ENCODE measurements at regions of chr6 and their contacts with region 1.

Region 1: DNA sequence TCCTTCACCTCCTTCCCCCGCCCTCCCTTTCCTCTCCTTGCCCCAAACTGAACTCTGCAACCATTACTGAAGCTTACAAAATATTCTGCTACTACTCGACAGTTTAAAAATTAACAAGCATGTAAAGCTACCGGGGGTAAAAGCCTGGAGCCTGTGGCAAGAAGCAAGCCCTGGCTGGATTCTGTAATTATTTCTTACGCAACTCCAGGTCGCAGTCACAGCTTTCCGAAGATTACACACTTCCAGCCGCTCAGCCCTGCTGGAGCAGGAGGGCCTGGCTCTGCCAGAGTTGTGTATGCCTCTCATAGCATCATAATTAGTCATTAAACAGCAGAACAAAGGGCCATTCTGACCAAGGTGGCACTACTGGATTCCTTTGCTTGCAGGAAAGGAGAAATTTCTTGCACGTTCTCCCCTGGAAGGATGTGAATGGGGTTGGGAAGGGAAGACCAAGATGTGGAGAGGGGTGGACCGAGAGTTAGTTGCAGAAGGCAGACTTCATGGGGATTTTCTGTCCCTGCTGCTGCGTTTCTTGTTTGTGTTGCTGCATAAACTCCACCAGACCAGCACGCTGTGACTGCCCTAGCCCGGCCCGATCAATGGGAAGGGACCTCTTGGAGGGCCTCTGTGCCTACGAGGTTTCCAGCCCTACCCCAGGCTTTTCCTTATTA is 23.6 kb downstream of the FOXQ1 start:
- DNase-seq: peak; percentile 95
- H3K4me3 Mint-ChIP-seq: no peak overlapping the region
- H3K27ac Mint-ChIP-seq: peak overlapping the region; percentile 39
- H3K4me1 Mint-ChIP-seq: peaks cover 25% of the 10 kb centered on the region
- H3K27me3 Mint-ChIP-seq: no peaks in the 10 kb centered on the region
- CTCF ChIP-seq: no peak

Region 2: GRCh38 chr6:188821-189655 is 1146.5 kb before region 1 on chr6:
- CTCF ChIA-PET with region 1: no interaction called
- POLR2A ChIA-PET with region 1: no interaction called
- intact Hi-C with region 1: loop called (anchors 5 kb)
- DNase-seq: peak; percentile 97
- H3K4me3 Mint-ChIP-seq: no peak overlapping the region
- H3K27ac Mint-ChIP-seq: peak overlapping the region; percentile 69
- H3K4me1 Mint-ChIP-seq: peaks cover 18% of the 10 kb centered on the region
- H3K27me3 Mint-ChIP-seq: no peaks in the 10 kb centered on the region
- CTCF ChIP-seq: peak; percentile 92

Region 3: DNA sequence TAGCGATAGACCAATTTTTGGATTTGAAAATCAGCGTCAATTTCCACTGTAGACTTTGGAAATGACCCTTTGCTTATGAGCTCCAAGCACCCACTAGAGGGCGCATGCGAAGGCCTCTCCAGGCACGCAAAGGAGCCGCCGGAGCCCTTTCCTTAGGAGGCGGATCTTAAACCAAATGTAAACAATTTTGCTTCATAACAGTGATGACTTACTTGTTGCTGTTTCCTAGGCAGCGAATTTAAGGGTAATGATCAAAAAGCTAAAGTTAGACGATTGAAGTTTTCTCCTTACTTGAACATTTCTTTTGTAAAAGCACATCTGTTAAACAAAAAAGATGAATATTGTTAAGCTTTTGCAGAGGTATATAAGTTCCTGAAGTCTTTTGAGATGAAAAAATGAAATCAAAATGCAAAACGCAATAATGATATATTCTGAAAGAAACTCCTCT is 613.4 kb before region 1 on chr6:
- CTCF ChIA-PET with region 1: interaction called, 5 read pairs
- POLR2A ChIA-PET with region 1: interaction called, 4 read pairs
- intact Hi-C with region 1: loop called (anchors 1 kb)
- DNase-seq: peak; percentile 87
- H3K4me3 Mint-ChIP-seq: no peak overlapping the region
- H3K27ac Mint-ChIP-seq: no peak overlapping the region
- H3K4me1 Mint-ChIP-seq: no peaks in the 10 kb centered on the region
- H3K27me3 Mint-ChIP-seq: peaks cover 12% of the 10 kb centered on the region
- CTCF ChIP-seq: peak; percentile 74

Region 4: DNA sequence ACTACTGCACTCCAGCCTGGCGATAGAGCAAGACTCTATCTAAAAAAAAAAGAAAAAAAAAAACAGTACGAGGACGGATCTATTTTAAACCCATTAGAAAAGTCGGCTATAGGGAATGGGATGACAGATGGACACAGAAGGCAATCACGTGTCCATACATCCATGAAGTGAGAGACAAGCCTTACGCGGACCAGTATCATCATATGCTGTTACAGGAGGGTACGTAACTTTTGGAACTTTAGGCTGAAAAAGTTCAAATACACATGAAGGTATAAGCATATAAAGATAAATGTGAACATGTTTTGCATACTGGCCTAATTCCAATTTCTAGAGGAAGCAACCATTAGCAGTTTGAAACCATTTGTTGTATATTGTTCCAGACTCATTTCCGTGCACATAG is 532.8 kb before region 1 on chr6:
- CTCF ChIA-PET with region 1: interaction called, 29 read pairs
- POLR2A ChIA-PET with region 1: interaction called, 3 read pairs
- intact Hi-C with region 1: loop called (anchors 1 kb)
- DNase-seq: no peak
- H3K4me3 Mint-ChIP-seq: no peak overlapping the region
- H3K27ac Mint-ChIP-seq: no peak overlapping the region
- H3K4me1 Mint-ChIP-seq: no peaks in the 10 kb centered on the region
- H3K27me3 Mint-ChIP-seq: no peaks in the 10 kb centered on the region
- CTCF ChIP-seq: no peak

Region 5: GRCh38 chr6:912871-913835 is 422.3 kb before region 1 on chr6:
- CTCF ChIA-PET with region 1: interaction called, 36 read pairs
- POLR2A ChIA-PET with region 1: interaction called, 30 read pairs
- intact Hi-C with region 1: loop called (anchors 1 kb)
- DNase-seq: peak; percentile 48
- H3K4me3 Mint-ChIP-seq: no peak overlapping the region
- H3K27ac Mint-ChIP-seq: no peak overlapping the region
- H3K4me1 Mint-ChIP-seq: no peaks in the 10 kb centered on the region
- H3K27me3 Mint-ChIP-seq: peaks cover 12% of the 10 kb centered on the region
- CTCF ChIP-seq: peak; percentile 77

Region 6: DNA sequence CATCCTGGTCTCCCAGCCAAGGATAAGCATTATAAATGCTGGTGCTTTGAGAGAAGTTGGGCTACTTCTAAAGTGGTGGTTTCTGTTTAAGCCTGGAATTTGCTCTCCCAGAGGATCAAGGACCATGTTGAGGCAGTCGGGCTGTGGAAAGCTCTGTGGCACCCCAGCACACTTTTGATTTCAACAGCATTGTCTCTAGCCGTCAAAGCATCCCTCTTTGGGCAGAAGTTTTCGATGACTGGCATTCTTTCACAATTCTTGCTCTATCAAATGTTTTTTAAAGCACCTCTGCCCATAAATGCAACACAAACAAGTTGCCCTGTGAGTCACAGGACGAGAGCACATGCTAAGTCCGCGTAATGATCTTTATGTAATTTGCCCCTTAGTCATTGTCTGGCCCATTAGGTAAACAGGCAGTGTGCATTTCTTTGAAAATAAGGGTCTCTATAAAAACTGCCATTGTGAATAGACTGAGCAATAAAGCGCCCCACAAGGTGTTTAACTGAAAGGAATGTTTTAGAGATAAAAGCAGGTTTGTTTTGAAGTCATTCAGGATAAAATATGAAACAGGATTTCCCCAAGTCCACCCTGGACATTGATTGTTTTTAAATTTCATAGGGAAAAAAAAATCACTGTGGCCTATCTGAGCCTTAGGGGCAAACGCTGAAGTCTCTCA is 68.3 kb before region 1 on chr6:
- CTCF ChIA-PET with region 1: interaction called, 6 read pairs
- POLR2A ChIA-PET with region 1: interaction called, 4 read pairs
- intact Hi-C with region 1: loop called (anchors 5 kb)
- DNase-seq: peak; percentile 94
- H3K4me3 Mint-ChIP-seq: peak overlapping the region; percentile 40
- H3K27ac Mint-ChIP-seq: peak overlapping the region; percentile 71
- H3K4me1 Mint-ChIP-seq: peaks cover 15% of the 10 kb centered on the region
- H3K27me3 Mint-ChIP-seq: no peaks in the 10 kb centered on the region
- CTCF ChIP-seq: no peak

Measured in MCF 10A (cell line).